ENCODE measurements at regions of chr19 and their contacts with region 1.

Region 1: DNA sequence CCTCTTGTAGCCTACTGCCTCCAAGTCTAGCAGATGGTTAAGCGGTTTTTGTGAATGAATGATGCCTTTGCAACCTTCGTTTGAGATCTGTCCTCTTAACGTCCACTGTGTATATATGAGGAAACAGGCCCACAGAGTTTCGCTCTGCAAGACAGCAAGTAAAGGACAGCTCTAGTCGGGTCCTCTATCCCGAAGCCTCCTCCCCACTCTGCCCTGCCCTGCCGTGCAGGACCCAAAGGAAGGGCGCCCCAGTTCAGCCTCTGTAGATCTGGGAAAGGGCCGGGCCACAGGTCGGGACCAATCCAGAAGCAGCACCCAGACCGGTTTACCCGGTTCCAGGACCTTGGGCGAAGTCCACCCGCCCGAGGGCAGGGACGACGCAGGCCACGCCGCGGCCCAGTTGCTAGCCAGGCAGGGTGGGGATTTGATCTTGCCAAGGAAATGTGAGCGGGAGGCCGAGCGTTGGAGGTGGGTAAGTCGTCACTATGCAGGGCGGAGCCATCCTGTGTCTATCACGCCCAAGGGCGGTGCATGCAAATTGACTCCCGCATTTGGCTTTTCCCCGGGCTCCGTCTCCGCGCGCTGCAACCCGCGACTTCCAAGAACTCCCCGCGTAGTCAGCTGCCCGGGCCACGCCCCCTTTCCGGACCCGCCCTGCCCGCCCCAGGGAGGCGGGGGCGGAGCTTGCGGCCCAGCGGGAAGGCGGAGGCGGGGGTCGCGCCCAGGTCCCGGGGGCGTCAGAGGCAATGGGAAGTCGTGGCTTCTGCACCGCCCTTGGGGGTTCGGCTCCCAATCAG is 12.5 kb downstream of the IER2 start:
- DNase-seq: peak; percentile 64 to 93
- ATAC-seq: peak; percentile 37 to 68 (median 42)
- H3K4me3 ChIP-seq: peak overlapping the region; percentile 48
- H3K4me3 Mint-ChIP-seq: peak overlapping the region; percentile 87
- H3K27ac ChIP-seq: peak overlapping the region; percentile 93
- H3K27ac Mint-ChIP-seq: peak overlapping the region; percentile 92 to 95
- H3K4me1 ChIP-seq: peaks cover 88% of the 10 kb centered on the region
- H3K4me1 Mint-ChIP-seq: peaks cover 42 to 65% of the 10 kb centered on the region in 2 donors
- H3K27me3 ChIP-seq: no peaks in the 10 kb centered on the region
- H3K27me3 Mint-ChIP-seq: no peaks in the 10 kb centered on the region
- CTCF ChIP-seq: no peak

Region 2: DNA sequence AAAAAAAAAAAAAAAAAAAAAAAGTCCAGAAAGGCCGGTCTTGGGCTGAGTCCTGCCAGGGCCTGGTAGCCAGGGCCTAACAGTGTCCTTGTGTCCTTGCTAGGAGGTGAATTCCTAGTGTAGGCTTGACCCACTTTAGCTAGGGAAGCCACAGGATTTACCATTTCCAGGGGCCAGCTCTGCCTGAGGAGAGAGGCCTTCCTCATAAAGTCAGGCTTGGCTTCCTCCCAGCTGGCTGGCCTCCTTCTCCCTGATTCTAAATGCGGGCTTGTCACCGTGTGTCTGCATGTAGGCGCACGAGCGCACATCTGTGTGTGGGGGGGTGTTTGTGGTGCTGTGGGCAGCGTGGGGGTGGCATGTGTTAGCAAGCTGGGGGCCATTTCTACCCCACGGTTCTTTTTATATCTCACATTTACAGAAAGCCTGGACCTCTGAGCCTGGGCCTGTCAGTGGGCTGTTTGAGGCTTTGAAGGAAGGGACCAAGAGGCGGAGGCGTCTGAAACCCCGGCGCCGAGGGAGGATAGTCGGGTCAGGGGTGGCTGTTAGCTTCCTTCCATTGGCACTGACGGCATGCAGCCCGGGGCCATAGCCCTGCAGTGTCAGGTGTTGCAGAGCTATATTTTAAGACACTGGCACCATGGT is 19.2 kb after region 1 on chr19:
- intact Hi-C with region 1: loop called (anchors 1 kb)
- DNase-seq: peak; percentile 66 to 67
- ATAC-seq: peak; percentile 83 to 92 (median 86)
- H3K4me3 ChIP-seq: no peak overlapping the region
- H3K4me3 Mint-ChIP-seq: peak overlapping the region; percentile 74
- H3K27ac ChIP-seq: peak overlapping the region; percentile 69
- H3K27ac Mint-ChIP-seq: peak overlapping the region; percentile 82 to 90
- H3K4me1 ChIP-seq: peaks cover 53% of the 10 kb centered on the region
- H3K4me1 Mint-ChIP-seq: peaks cover 15 to 32% of the 10 kb centered on the region in 2 donors
- H3K27me3 ChIP-seq: no peaks in the 10 kb centered on the region
- H3K27me3 Mint-ChIP-seq: no peaks in the 10 kb centered on the region
- CTCF ChIP-seq: no peak

Measured in natural killer cell (primary cell).